ENCODE measurements at regions of chr12 and their contacts with region 1.

Region 1: DNA sequence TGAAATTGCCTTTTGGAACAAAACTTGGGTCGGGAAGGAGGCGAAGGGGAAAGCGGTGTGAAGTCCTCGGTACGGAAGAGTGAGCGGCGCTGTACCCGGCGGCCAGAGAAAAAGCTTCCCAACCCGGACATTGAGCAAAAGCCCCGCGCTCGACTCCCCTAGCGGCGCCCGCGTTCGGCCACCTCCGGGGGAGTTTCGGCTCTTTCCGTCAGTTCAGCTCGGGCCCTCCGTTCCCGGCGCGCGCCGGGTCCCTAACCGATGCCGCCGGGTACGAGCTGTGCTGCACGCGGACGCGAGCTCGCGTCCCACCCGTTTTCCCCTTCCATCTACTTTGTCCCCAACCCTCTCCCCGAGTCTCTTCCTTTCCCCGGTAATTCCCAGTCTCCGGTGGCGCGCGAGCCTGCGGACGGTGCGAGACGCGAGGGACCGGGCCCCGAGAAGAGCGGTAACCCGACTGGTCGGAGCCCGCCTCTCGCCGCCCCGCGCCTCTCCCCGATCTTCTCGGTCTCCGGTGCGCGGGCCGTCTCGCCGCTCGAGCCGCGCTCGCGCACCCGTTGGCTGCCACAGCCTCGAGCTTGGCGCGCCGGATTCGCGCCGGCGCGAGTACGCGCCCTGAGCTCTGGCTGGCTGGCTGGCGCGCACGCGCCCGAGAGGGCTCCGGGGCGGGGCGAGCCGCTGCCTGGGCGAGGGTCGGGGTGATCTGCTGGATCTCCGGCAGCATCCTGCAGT is 446 bp upstream of the SPATS2 start:
- DNase-seq: peak; percentile 84
- H3K4me3 ChIP-seq: peak overlapping the region; percentile 64
- CTCF ChIP-seq: no peak

Region 2: DNA sequence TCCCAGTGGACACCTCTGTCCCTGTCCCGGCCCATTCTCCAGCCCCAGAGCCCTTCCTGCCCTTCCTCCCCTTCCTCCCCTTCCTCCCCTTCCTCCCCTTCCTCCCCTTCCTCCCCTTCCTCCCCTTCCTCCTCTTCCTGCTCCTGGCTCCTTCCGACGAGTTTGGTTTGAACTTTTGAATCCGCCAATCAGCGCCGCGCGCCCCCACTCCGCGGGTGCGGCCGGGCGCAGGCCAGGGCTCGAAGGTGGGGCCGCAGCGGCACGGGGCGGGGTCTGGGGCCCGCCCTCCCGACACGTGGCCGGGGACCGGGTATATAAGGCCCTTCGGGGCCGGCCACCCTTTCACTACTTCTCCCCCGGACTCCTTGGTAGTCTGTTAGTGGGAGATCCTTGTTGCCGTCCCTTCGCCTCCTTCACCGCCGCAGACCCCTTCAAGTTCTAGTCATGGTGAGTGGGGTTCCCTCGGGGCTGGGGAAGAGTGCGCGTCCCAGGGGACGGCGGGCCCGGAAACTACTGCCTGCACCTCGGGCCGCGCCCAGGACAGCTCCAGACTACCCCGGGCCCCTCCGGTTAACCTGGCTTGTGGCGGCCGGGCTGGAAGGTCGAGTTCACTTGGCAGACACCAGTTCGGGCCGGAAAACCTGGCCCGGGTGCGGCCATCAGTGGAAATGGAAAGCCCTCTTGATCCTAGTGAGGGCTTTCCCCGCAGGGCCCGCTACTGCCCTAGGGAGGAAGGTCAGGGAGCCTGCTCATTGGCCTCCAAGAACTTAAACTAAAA is 101.9 kb before region 1 on chr12 and contains the start of gene TUBA1C:
- in situ Hi-C with region 1: loop called (anchors 5 kb)
- DNase-seq: peak; percentile 65
- H3K4me3 ChIP-seq: peak within 1 kb of the TSS; percentile 94
- CTCF ChIP-seq: no peak

Region 3: GRCh38 chr12:49415521-49415970 is 48.7 kb after region 1 on chr12:
- in situ Hi-C with region 1: loop called (anchors 5 kb)
- DNase-seq: no peak
- H3K4me3 ChIP-seq: no peak overlapping the region
- CTCF ChIP-seq: no peak

Region 4: GRCh38 chr12:49507139-49507538 is 140.3 kb after region 1 on chr12:
- in situ Hi-C with region 1: loop called (anchors 5 kb)
- DNase-seq: peak; percentile 78
- H3K4me3 ChIP-seq: no peak overlapping the region
- CTCF ChIP-seq: no peak

Measured in astrocyte of the cerebellum (primary cell).